ENCODE measurements at regions of chr15 and their contacts with region 1.

Region 1: DNA sequence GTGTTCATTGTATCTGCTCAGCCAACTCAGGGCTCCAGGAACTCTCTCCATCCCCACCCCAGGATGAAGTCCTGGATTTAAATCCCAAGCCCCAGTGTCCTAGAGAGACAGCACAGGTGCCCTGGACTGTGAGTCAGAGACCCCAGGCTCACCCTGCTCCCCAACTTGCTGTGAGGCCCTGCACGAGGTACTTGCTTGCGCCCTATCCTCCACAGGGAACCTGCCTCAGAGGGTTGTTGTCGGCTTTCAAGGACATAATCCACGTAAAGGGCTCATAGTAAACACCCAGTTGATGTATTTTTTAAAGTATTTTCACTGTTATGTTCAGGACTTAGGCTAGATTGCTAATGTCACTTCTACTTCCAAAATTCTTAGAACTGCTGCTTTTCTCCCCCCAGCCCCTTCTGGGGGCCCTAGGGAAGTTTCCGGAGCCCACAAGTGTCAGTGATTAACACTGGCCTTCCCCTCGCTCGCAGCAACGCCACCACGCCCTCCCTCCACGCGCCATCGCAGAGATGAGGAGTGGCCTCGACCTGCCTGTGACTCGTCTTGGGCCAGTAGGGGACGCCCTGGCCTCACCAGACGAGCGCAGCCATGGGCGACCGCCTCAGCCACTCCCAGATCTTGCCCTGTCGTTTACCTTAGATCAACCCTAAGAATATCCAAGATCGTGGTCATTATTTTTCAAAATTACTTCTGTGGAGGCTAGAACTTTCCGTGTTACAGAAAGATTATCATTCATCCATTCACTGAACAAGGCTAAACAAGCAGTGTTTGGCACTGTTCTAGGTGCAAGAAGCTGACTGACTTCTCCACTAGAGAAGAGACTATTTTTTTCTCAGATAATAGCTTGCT is 6.0 kb upstream of the SRP14 start:
- DNase-seq: peak; percentile 76 to 93 (median 84)
- ATAC-seq: peak; percentile 93 to 97 (median 94)
- H3K4me3 ChIP-seq: peak overlapping the region in 1 of 4 donors; percentile 16
- H3K27ac ChIP-seq: no peak overlapping the region
- H3K4me1 ChIP-seq: peaks cover 0 to 26% (median 0%) of the 10 kb centered on the region in 3 donors
- H3K27me3 ChIP-seq: no peaks in the 10 kb centered on the region
- CTCF ChIP-seq: peak; percentile 67 to 87 (median 74)

Region 2: DNA sequence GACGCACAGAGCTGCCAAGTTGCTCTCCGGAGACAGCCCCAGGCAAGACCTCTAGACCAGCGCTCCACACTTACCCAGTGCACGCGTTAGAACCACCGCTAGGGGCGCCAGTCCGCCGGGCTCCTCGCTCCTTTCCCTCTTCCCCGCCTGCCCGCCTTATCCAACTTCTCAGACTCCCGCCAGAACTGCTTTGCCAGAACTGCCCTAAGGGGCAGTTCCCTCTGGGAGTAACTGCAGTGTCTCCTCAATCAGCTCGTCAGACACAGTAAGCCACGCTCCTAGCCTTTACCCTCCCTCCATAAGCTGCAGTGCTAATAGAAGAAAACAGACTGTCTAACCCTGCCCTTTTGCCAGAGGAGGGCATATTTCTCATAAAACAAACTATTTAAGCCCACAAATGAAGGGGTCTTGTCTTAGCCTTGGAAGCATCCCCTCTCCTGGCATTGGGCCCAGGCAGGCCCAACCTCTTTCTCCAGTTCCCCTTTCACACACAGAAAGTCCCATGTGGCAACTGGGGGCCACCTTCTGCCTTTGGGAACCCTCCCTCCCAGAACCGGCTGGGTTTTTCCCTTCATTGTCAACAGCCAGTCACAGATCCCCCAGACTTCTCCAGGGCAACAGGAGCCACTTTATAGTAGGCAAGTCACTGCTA is 60.0 kb after region 1 on chr15:
- intact Hi-C with region 1: loop called in 2 of 3 experiments (anchors 5 kb)
- DNase-seq: peak; percentile 82 to 96 (median 90)
- ATAC-seq: peak; percentile 19 to 49 (median 38)
- H3K4me3 ChIP-seq: peak overlapping the region in 1 of 4 donors; percentile 6
- H3K27ac ChIP-seq: peak overlapping the region in 2 of 4 donors; percentile 85 to 93
- H3K4me1 ChIP-seq: peaks cover 56 to 71% (median 67%) of the 10 kb centered on the region in 3 donors
- H3K27me3 ChIP-seq: no peaks in the 10 kb centered on the region
- CTCF ChIP-seq: peak; percentile 95 to 97 (median 96)

Region 3: GRCh38 chr15:40115670-40116093 is 70.7 kb after region 1 on chr15:
- intact Hi-C with region 1: loop called in 1 of 3 experiments (anchors 5 kb)
- DNase-seq: peak; percentile 77 to 86 (median 82)
- ATAC-seq: peak; percentile 93 to 98 (median 94)
- H3K4me3 ChIP-seq: no peak overlapping the region
- H3K27ac ChIP-seq: peak overlapping the region in 2 of 4 donors; percentile 29 to 47
- H3K4me1 ChIP-seq: peaks cover 0 to 9% (median 0%) of the 10 kb centered on the region in 3 donors
- H3K27me3 ChIP-seq: no peaks in the 10 kb centered on the region
- CTCF ChIP-seq: no peak

Region 4: DNA sequence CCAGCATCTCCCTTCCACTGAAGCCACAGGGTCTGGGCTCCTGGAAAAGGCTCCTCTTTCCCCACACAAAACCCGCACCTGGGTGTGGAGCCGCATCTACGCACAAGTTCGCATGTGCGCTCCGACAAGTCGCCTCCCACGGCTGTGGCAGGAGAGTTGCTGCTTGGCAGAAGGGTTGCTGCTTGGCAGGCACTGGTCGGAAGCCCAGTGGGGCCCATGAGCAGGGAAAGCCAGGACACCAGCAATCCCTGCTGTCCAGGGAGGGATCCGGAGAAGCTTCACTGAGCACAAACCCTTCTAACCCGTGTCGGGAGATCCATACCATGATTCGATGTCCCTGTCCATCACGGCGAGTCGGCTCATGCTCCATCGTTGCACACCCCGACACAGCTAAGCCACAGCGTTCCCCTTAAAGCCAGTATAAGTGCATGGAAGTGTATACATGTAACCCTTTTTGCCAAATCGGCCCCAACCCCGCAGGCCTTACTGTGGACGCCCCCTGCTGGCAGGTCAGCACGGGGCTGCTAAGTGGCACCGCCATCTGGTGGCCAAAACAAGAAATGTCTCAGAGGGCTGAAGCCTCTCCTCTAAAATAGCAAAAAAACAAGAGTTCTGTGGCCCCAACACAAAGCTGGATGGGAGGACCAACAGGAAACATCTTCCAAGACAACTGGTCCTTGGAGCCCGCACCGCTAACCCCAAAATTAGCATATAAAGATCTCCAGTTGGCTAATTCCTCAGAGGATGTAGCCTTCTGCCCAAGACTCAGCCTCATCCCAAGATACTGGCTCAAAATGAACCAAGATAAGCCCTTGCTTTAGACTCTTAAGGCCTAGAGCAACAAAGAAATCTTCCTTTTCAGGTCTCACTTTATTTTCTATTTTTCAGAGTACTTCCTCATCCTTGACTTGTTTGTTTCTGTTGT is 229.7 kb after region 1 on chr15:
- intact Hi-C with region 1: loop called in 1 of 3 experiments (anchors 5 kb)
- DNase-seq: peak; percentile 62 to 96 (median 86)
- ATAC-seq: peak; percentile 66 to 87 (median 82)
- H3K4me3 ChIP-seq: no peak overlapping the region
- H3K27ac ChIP-seq: no peak overlapping the region
- H3K4me1 ChIP-seq: peaks cover 0 to 3% (median 0%) of the 10 kb centered on the region in 3 donors
- H3K27me3 ChIP-seq: no peaks in the 10 kb centered on the region
- CTCF ChIP-seq: peak; percentile 100

Measured in pancreas (tissue), 10 donors.